PC-9 (cell line): ENCODE measurements at regions of chr17 and their contacts with region 1.

Region 1: GRCh38 chr17:20926532-20926931 is 116.3 kb downstream of the USP22 start:
- DNase-seq: peak in 1 of 2 experiments; percentile 66
- H3K4me3 ChIP-seq: no peak overlapping the region
- H3K27ac ChIP-seq: no peak overlapping the region
- H3K4me1 ChIP-seq: peaks cover 14% of the 10 kb centered on the region
- H3K27me3 ChIP-seq: no peaks in the 10 kb centered on the region
- CTCF ChIP-seq: no peak

Region 2: GRCh38 chr17:20914658-20915057 is 11.9 kb before region 1 on chr17:
- CTCF ChIA-PET with region 1: no interaction called
- POLR2A ChIA-PET with region 1: interaction called, 14 read pairs
- intact Hi-C with region 1: no loop called
- DNase-seq: no peak
- H3K4me3 ChIP-seq: no peak overlapping the region
- H3K27ac ChIP-seq: no peak overlapping the region
- H3K4me1 ChIP-seq: peaks cover 1% of the 10 kb centered on the region; the same call in 1 of the 2 replicates
- H3K27me3 ChIP-seq: no peaks in the 10 kb centered on the region
- CTCF ChIP-seq: no peak

Region 3: DNA sequence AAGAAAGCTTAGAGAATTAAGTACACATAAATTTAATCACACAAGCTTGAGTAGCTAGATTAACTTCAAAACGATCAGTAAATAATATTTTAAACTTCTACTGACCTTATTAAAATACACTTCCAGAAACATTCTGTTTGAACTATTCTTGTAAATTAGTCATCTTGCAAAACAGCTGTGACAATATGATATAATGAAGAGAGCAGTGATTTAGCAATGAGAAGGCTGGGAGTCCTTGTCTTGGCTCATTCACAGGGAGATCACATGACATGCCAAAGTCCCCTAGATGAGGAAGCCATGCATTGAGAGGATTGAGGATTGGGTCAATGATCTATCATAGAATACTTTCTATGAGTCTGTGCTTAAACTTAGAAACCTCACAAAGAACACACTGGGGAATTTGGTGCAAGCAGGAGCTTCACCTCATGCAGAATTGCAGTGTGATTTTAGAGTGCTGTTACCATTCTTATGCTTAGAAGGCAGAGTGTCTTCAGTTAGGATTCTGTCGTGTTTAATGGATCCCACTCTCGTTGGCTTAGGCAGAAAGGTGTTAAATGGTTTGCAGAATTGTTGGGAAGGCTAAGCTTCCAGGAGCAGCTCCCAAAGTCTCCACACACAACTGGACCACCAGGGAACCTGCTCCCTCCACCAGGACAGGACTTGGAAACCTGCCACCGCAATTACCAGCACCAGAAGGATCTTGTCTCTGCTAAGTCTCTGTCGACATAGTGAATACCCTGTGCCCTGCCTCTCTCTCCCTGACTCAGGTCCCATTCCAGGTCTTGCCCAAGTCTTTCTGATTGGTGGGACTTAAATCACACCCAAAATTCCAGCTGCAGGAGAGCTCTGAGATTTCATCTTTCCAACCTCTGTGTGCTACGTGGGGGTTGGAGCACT is 29.1 kb after region 1 on chr17:
- CTCF ChIA-PET with region 1: no interaction called
- POLR2A ChIA-PET with region 1: no interaction called
- intact Hi-C with region 1: no loop called
- DNase-seq: peak in 1 of 2 experiments; percentile 64
- H3K4me3 ChIP-seq: no peak overlapping the region
- H3K27ac ChIP-seq: no peak overlapping the region
- H3K4me1 ChIP-seq: peaks cover 7% of the 10 kb centered on the region; the same call in 1 of the 2 replicates
- H3K27me3 ChIP-seq: peaks cover 13% of the 10 kb centered on the region
- CTCF ChIP-seq: no peak

Region 4: DNA sequence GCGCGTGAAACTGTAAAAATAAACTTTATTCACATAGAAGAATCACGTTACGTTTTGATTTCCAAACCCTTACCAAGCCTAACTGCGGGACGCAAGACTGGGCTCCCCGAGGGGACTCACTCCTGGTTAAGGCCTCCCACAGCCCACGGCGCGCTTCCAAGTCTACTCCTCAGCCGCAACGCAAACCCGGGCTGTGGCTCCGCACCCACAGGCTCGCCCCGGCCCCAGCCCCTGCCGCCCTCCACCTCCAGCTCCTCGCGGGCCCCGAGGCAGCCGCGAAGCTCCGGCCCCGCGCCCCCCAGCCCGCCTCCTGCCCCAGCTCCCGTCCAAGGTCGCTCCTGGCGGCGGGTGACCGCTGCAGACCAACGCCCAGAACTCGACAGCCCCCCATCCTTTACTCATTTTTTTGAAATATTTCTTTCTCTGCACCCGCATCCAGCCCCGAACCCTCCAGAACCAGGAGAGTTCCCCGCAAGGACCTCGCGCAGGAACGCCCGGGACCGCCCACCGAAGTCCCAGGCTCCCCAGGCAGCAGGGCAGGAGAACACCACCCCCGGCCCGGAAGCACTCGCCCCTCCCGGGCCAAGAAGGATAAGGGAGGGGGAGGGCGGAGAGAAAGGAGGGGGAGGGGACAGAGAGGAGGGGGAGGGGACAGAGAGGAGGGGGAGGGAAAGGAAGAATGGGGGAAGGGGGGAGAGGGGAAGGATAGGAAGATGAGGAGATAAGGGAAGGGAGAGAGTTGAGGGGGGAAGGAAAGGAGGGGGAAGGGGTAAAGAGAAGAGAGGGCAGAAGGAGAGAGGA is 115.4 kb after region 1 on chr17:
- CTCF ChIA-PET with region 1: no interaction called
- POLR2A ChIA-PET with region 1: no interaction called
- intact Hi-C with region 1: no loop called
- DNase-seq: peak; percentile 48 to 73
- H3K4me3 ChIP-seq: peak overlapping the region; percentile 98
- H3K27ac ChIP-seq: peak overlapping the region; percentile 73; the same call in 1 of the 2 replicates
- H3K4me1 ChIP-seq: peaks cover 20% of the 10 kb centered on the region
- H3K27me3 ChIP-seq: no peaks in the 10 kb centered on the region
- CTCF ChIP-seq: no peak

Region 5: GRCh38 chr17:22409160-22409751 is 1482.7 kb after region 1 on chr17:
- CTCF ChIA-PET with region 1: no interaction called
- POLR2A ChIA-PET with region 1: no interaction called
- intact Hi-C with region 1: no loop called
- DNase-seq: no peak
- H3K4me3 ChIP-seq: no peak overlapping the region
- H3K27ac ChIP-seq: no peak overlapping the region
- H3K4me1 ChIP-seq: no peaks in the 10 kb centered on the region
- H3K27me3 ChIP-seq: peaks cover 42% of the 10 kb centered on the region
- CTCF ChIP-seq: no peak